MCF 10A (cell line): ENCODE measurements at regions of chr7 and their contacts with region 1.

Region 1: DNA sequence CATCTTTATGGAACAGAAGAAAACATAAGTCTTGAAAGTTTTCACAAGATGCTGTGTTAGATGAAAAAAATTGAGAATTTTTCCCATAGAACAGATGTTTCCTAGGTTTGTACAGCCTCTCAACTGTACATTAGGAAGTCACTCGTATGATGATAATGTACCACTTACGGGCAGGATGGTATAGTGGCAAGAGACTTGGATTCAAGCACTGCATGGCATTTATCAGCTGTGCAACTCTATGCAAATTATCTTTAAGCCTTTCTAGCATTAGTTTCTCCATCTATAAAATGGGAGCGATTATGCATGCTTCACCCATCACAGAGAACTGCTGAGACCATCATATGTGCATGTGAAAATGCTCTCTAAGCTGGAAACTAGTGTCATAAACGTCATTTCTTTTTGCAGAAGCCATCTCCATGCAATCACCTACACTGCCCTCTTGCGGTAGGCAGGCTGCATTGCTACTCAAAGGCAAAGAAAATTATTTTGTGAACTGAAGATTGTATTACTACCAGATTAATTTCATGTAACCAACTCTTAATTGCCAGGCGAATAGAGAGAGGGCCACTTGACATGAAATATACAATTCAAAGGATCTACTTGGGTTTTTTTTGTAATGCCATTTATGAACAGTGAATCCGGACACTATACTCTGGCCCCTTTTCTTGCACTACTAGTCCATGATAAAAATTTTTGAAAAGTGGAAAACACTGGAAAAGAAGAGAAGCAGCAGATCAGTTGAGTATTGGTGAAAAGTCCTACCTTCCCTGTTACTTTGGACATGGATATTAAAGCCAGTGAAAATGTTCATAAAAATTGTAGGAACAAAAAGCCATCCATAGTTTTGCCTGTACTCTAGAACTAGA is 102.3 kb downstream of the JAZF1 start:
- DNase-seq: peak; percentile 55
- H3K4me3 Mint-ChIP-seq: no peak overlapping the region
- H3K27ac Mint-ChIP-seq: no peak overlapping the region
- H3K4me1 Mint-ChIP-seq: peaks cover 22% of the 10 kb centered on the region
- H3K27me3 Mint-ChIP-seq: no peaks in the 10 kb centered on the region
- CTCF ChIP-seq: peak; percentile 87

Region 2: GRCh38 chr7:27973625-27974024 is 104.6 kb before region 1 on chr7:
- CTCF ChIA-PET with region 1: no interaction called
- POLR2A ChIA-PET with region 1: no interaction called
- intact Hi-C with region 1: no loop called
- DNase-seq: no peak
- H3K4me3 Mint-ChIP-seq: no peak overlapping the region
- H3K27ac Mint-ChIP-seq: no peak overlapping the region
- H3K4me1 Mint-ChIP-seq: no peaks in the 10 kb centered on the region
- H3K27me3 Mint-ChIP-seq: no peaks in the 10 kb centered on the region
- CTCF ChIP-seq: no peak

Region 3: GRCh38 chr7:28037220-28038010 is 40.9 kb before region 1 on chr7:
- CTCF ChIA-PET with region 1: interaction called, 7 read pairs
- POLR2A ChIA-PET with region 1: interaction called, 12 read pairs
- intact Hi-C with region 1: no loop called
- DNase-seq: peak; percentile 93
- H3K4me3 Mint-ChIP-seq: peak overlapping the region; percentile 12
- H3K27ac Mint-ChIP-seq: peak overlapping the region; percentile 72
- H3K4me1 Mint-ChIP-seq: peaks cover 58% of the 10 kb centered on the region
- H3K27me3 Mint-ChIP-seq: no peaks in the 10 kb centered on the region
- CTCF ChIP-seq: no peak

Region 4: DNA sequence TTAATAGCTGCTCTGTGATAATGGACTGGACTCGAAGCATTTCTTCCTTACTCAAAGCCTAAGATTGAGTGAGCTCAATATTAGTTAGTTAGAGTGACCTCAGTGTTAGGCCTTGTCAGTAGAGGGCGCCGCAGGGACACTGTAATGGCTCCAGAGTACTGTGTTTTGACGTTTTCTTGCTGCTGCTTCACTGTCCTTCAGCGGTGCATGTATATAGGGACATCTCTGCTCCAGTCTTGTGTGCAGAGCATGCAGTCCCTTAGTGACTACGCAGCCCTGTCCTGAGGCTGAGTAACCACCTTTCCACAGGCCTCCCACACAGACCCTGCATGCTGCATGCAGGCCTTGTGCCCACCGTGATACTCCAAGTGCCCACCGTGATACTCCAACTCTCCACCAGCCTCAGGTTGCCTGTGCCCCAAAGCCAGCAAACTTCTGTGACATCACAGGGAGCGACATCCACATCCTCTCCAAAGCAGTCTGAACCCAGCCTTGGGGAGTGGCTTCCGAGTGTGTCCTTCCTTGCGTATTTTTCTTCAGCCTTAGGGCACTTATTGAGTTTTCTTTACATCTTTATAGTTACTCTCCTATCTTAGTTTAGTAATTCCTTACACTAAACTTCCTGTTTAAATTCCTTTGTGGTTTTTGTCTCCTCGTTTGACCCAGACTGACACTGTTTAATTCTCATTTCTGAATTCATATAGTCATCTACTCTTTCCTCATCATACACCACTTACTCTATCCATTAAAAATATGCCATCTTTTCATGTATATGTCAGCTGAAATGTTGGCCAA is 15.9 kb before region 1 on chr7:
- CTCF ChIA-PET with region 1: interaction called, 21 read pairs
- POLR2A ChIA-PET with region 1: interaction called, 3 read pairs
- intact Hi-C with region 1: no loop called
- DNase-seq: peak; percentile 80
- H3K4me3 Mint-ChIP-seq: no peak overlapping the region
- H3K27ac Mint-ChIP-seq: no peak overlapping the region
- H3K4me1 Mint-ChIP-seq: peaks cover 13% of the 10 kb centered on the region
- H3K27me3 Mint-ChIP-seq: no peaks in the 10 kb centered on the region
- CTCF ChIP-seq: peak; percentile 33

Region 5: DNA sequence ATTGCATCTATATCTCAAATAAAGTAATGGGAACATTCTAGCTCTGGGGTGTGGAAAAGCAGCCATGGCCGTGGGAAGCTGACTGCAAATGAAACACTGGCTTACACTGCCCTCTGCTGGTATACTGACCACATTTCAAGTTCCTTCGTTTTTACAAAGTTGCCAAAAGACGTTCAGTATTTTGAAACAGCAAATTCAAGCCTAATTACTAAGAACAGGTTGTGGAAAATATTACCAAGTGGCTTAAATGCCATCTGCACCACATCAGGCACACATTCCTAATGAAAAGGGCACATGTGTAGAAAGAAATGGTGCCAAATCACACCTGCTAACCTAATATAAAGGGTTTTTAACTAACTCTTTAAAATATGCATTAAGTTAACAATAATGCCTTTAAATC is 18.4 kb after region 1 on chr7:
- CTCF ChIA-PET with region 1: interaction called, 108 read pairs
- POLR2A ChIA-PET with region 1: interaction called, 8 read pairs
- intact Hi-C with region 1: no loop called
- DNase-seq: peak; percentile 69
- H3K4me3 Mint-ChIP-seq: no peak overlapping the region
- H3K27ac Mint-ChIP-seq: no peak overlapping the region
- H3K4me1 Mint-ChIP-seq: no peaks in the 10 kb centered on the region
- H3K27me3 Mint-ChIP-seq: no peaks in the 10 kb centered on the region
- CTCF ChIP-seq: peak; percentile 70

Region 6: DNA sequence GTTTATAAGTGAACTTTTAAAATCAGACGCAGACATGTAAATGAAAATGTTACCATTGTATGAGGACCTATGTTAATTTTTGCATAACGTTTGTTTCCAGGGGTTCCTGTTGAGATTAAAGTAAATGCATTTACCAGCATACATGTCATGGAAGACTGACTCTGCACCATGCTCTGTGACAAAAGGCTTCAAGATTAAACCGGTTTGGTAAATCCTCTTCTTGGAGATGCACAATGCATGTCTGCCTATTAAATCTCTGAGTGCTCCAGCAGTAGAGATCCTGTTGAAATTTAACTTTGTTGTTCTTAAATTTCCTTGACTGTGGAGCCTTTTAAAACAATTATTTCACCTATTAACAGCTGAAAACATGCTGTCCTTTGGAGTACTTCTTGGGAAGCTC is 138.9 kb after region 1 on chr7:
- CTCF ChIA-PET with region 1: no interaction called
- POLR2A ChIA-PET with region 1: no interaction called
- intact Hi-C with region 1: no loop called
- DNase-seq: no peak
- H3K4me3 Mint-ChIP-seq: no peak overlapping the region
- H3K27ac Mint-ChIP-seq: no peak overlapping the region
- H3K4me1 Mint-ChIP-seq: no peaks in the 10 kb centered on the region
- H3K27me3 Mint-ChIP-seq: no peaks in the 10 kb centered on the region
- CTCF ChIP-seq: no peak

Region 7: GRCh38 chr7:28270536-28270935 is 192.3 kb after region 1 on chr7:
- CTCF ChIA-PET with region 1: no interaction called
- POLR2A ChIA-PET with region 1: no interaction called
- intact Hi-C with region 1: no loop called
- DNase-seq: no peak
- H3K4me3 Mint-ChIP-seq: no peak overlapping the region
- H3K27ac Mint-ChIP-seq: no peak overlapping the region
- H3K4me1 Mint-ChIP-seq: peaks cover 8% of the 10 kb centered on the region
- H3K27me3 Mint-ChIP-seq: no peaks in the 10 kb centered on the region
- CTCF ChIP-seq: no peak

Region 8: DNA sequence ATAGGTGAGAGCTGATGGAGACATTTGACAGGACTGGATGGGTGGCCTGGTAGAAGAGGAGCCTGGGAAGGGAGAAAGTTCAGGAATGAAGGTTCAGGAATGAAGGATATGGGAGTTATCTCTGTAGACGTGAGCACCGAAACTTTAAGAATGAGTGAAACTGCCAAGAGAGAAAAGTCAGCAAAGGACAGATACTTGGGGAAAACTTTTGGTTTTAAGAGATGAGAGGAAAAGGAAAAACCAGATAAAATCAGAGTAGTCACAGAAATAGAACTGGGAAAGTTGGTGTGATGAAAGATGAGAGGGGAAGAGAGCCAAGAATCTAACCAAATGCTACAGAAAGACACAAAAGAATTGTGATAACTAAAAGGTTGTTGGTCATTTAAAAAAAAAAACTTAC is 1574.3 kb after region 1 on chr7:
- CTCF ChIA-PET with region 1: no interaction called
- POLR2A ChIA-PET with region 1: no interaction called
- intact Hi-C with region 1: no loop called
- DNase-seq: no peak
- H3K4me3 Mint-ChIP-seq: no peak overlapping the region
- H3K27ac Mint-ChIP-seq: no peak overlapping the region
- H3K4me1 Mint-ChIP-seq: no peaks in the 10 kb centered on the region
- H3K27me3 Mint-ChIP-seq: no peaks in the 10 kb centered on the region
- CTCF ChIP-seq: no peak